ENCODE measurements at regions of chr5 and their contacts with region 1.

Region 1: GRCh38 chr5:62403434-62404250 is at the start of gene DIMT1:
- DNase-seq: peak; percentile 86
- ATAC-seq: peak; percentile 98
- H3K4me3 ChIP-seq: peak within 1 kb of the TSS; percentile 87
- H3K27ac ChIP-seq: peak within 1 kb of the TSS; percentile 94
- H3K4me1 ChIP-seq: 0 out of 2 replicates have a peak, but pooled peaks cover 6% of the 10 kb centered on the region
- H3K27me3 ChIP-seq: no peaks in the 10 kb centered on the region
- CTCF ChIP-seq: no peak
- EP300 ChIP-seq: no peak
- POLR2A ChIP-seq: peak; percentile 95
- RAD21 ChIP-seq: no peak
- polyA plus RNA-seq, gene DIMT1: 19.0 to 26.4 TPM

Region 2: DNA sequence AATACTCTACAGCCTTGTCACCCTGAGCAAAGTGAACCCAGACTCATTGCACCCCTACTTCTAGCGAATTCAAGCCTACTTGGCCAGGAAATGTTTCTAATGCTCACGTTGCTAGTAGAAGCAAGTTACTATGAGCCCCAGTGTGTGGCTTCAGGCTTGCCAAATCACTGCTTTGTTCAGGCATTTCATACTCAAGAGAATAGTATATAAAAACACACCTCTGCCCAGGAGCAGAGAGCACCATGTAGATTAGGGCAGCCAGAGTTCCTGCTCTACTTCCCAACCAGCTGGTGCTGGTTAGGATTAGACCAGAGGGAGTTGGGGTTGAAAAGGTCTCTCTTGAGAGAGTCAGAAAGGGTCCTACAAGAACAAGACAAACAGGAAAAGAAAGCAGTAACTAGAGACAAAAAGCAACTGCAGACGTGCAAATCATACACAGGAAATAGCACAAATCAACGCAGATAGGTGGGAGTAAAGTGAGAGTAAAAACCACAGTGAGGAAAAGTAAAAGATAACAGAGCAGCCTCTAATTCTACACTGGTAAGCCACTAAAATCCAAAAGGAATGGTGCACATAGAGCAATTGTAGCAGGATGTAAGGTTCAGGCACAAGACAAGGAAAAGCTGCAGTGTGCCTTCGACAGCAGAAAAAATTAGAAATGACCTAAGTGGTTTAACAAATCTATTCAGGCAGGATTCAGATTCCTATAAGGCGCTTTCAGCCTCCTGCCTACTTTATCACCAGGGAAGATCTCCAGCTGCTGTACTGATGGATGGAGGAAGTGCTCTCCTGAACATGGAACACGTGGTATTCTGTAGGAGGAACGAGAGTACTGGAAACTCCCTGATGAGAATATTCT is 147.3 kb before region 1 on chr5:
- CTCF ChIA-PET with region 1: no interaction called
- POLR2A ChIA-PET with region 1: no interaction called
- RAD21 ChIA-PET with region 1: no interaction called
- SMC1A ChIA-PET with region 1: no interaction called
- in situ Hi-C with region 1: no loop called
- intact Hi-C with region 1: no loop called
- DNase-seq: no peak
- ATAC-seq: peak; percentile 81
- H3K4me3 ChIP-seq: peak overlapping the region; percentile 8; the same call in 1 of the 2 replicates
- H3K27ac ChIP-seq: peak overlapping the region; percentile 56
- H3K4me1 ChIP-seq: 0 out of 2 replicates have a peak, but pooled peaks cover 3% of the 10 kb centered on the region
- H3K27me3 ChIP-seq: no peaks in the 10 kb centered on the region
- CTCF ChIP-seq: no peak
- EP300 ChIP-seq: no peak
- POLR2A ChIP-seq: no peak
- RAD21 ChIP-seq: no peak

Region 3: GRCh38 chr5:62386824-62387223 is 16.8 kb before region 1 on chr5:
- CTCF ChIA-PET with region 1: interaction called, 4 read pairs
- POLR2A ChIA-PET with region 1: interaction called, 12 read pairs
- RAD21 ChIA-PET with region 1: interaction called, 4 read pairs
- SMC1A ChIA-PET with region 1: interaction called, 21 read pairs
- in situ Hi-C with region 1: no loop called
- intact Hi-C with region 1: no loop called
- DNase-seq: no peak
- ATAC-seq: no peak
- H3K4me3 ChIP-seq: no peak overlapping the region
- H3K27ac ChIP-seq: no peak overlapping the region
- H3K4me1 ChIP-seq: no peaks in the 10 kb centered on the region
- H3K27me3 ChIP-seq: no peaks in the 10 kb centered on the region
- CTCF ChIP-seq: no peak
- EP300 ChIP-seq: no peak
- POLR2A ChIP-seq: no peak
- RAD21 ChIP-seq: no peak

Measured in GM12878 (cell line).